MCF 10A (cell line): ENCODE measurements at regions of chr3 and their contacts with region 1.

Region 1: GRCh38 chr3:194344012-194344411 is 7.1 kb downstream of the CPN2 start:
- DNase-seq: peak; percentile 70
- H3K4me3 Mint-ChIP-seq: no peak overlapping the region
- H3K27ac Mint-ChIP-seq: no peak overlapping the region
- H3K4me1 Mint-ChIP-seq: no peaks in the 10 kb centered on the region
- H3K27me3 Mint-ChIP-seq: no peaks in the 10 kb centered on the region
- CTCF ChIP-seq: peak; percentile 88

Region 2: GRCh38 chr3:193665370-193665989 is 678.5 kb before region 1 on chr3:
- CTCF ChIA-PET with region 1: interaction called, 78 read pairs
- POLR2A ChIA-PET with region 1: no interaction called
- intact Hi-C with region 1: loop called (anchors 1 kb)
- DNase-seq: peak; percentile 40
- H3K4me3 Mint-ChIP-seq: no peak overlapping the region
- H3K27ac Mint-ChIP-seq: no peak overlapping the region
- H3K4me1 Mint-ChIP-seq: no peaks in the 10 kb centered on the region
- H3K27me3 Mint-ChIP-seq: no peaks in the 10 kb centered on the region
- CTCF ChIP-seq: peak; percentile 36

Region 3: GRCh38 chr3:194323785-194324735 is 20.0 kb before region 1 on chr3:
- CTCF ChIA-PET with region 1: interaction called, 112 read pairs
- POLR2A ChIA-PET with region 1: interaction called, 19 read pairs
- intact Hi-C with region 1: no loop called
- DNase-seq: peak; percentile 86
- H3K4me3 Mint-ChIP-seq: no peak overlapping the region
- H3K27ac Mint-ChIP-seq: no peak overlapping the region
- H3K4me1 Mint-ChIP-seq: no peaks in the 10 kb centered on the region
- H3K27me3 Mint-ChIP-seq: no peaks in the 10 kb centered on the region
- CTCF ChIP-seq: no peak

Region 4: GRCh38 chr3:194355379-194355778 is 11.4 kb after region 1 on chr3:
- CTCF ChIA-PET with region 1: interaction called, 44 read pairs
- POLR2A ChIA-PET with region 1: interaction called, 6 read pairs
- intact Hi-C with region 1: no loop called
- DNase-seq: no peak
- H3K4me3 Mint-ChIP-seq: no peak overlapping the region
- H3K27ac Mint-ChIP-seq: no peak overlapping the region
- H3K4me1 Mint-ChIP-seq: no peaks in the 10 kb centered on the region
- H3K27me3 Mint-ChIP-seq: peaks cover 36% of the 10 kb centered on the region
- CTCF ChIP-seq: no peak

Region 5: DNA sequence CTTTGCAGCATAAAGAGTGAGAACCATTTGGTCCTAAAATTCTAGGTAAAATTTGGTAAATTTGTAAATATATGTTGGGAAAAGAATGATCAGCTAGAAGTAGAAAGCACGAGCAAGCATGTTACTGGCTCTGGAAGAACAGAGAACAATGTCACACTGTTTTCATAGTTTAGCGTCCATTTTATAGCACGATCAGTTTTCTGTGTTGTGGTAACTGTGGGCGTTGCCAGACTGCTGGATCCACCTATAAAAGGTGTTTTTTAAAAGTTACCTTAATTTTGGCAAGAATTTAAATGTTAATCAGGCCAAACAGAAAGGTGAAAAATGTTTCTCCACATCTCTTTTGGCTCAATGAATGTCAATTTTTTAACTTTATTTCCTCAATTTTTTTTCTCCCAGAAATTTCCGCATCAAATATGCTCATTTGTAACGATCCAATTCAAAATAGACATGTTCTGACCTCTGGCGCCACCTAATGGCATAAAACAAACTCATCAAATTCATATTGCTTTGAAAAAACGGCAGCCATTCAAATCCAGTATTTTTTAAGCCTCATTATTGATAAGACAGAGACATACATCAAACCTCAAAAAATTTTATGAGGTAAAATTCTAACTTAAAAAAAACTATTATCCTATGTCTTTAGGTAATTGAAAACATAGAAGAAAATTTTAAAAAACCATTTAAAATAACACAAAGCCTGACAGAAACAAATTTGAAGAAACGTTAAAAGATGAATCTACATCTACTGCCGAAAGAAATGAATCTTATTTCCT is 60.5 kb after region 1 on chr3:
- CTCF ChIA-PET with region 1: interaction called, 57 read pairs
- POLR2A ChIA-PET with region 1: no interaction called
- intact Hi-C with region 1: no loop called
- DNase-seq: peak; percentile 60
- H3K4me3 Mint-ChIP-seq: no peak overlapping the region
- H3K27ac Mint-ChIP-seq: no peak overlapping the region
- H3K4me1 Mint-ChIP-seq: no peaks in the 10 kb centered on the region
- H3K27me3 Mint-ChIP-seq: no peaks in the 10 kb centered on the region
- CTCF ChIP-seq: peak; percentile 72